ENCODE measurements at regions of chr12 and their contacts with region 1.

Region 1: GRCh38 chr12:3299929-3300832 is 190.8 kb upstream of the PRMT8 start:
- DNase-seq: peak; percentile 92 to 96
- ATAC-seq: peak; percentile 86 to 93 (median 90)
- H3K4me3 ChIP-seq: no peak overlapping the region
- H3K27ac ChIP-seq: peak overlapping the region; percentile 71
- H3K4me1 ChIP-seq: peaks cover 14% of the 10 kb centered on the region
- H3K27me3 ChIP-seq: peaks cover 0 to 4% (median 0%) of the 10 kb centered on the region in 3 donors
- CTCF ChIP-seq: peak; percentile 92

Region 2: DNA sequence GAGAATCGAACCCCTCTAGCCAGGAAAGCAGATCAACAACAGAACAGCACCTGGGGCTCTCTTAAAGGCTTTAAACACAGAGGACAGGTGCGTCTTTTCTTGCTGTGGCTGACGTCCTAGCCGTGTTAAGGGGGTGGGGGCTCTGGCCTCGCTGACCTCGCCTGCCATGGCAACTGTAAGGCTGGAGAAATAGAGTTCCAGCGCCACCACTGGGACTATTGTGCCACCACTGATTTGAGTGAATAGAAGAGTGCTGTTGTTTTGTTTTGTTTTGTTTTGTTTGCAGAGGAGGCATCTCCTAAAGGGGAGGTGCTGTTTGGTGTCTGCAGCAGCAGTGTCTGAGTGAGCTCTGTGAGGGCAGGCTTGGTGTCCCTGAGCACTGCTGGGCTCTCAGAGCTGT is 156.6 kb after region 1 on chr12:
- intact Hi-C with region 1: loop called in 1 of 2 experiments (anchors 2 kb)
- DNase-seq: no peak
- ATAC-seq: no peak
- H3K4me3 ChIP-seq: no peak overlapping the region
- H3K27ac ChIP-seq: no peak overlapping the region
- H3K4me1 ChIP-seq: no peaks in the 10 kb centered on the region
- H3K27me3 ChIP-seq: peaks cover 0 to 19% (median 2%) of the 10 kb centered on the region in 3 donors
- CTCF ChIP-seq: no peak

Region 3: GRCh38 chr12:3533703-3534386 is 233.7 kb after region 1 on chr12:
- intact Hi-C with region 1: loop called in 1 of 2 experiments (anchors 5 kb)
- DNase-seq: peak in 1 of 2 donors; percentile 78
- ATAC-seq: peak; percentile 42 to 83 (median 66)
- H3K4me3 ChIP-seq: no peak overlapping the region
- H3K27ac ChIP-seq: peak overlapping the region; percentile 23
- H3K4me1 ChIP-seq: peaks cover 26% of the 10 kb centered on the region
- H3K27me3 ChIP-seq: no peaks in the 10 kb centered on the region
- CTCF ChIP-seq: peak; percentile 13

Region 4: GRCh38 chr12:3777206-3777809 is 477.1 kb after region 1 on chr12:
- intact Hi-C with region 1: loop called (anchors 1 to 5 kb)
- DNase-seq: no peak
- ATAC-seq: peak; percentile 66 to 86 (median 70)
- H3K4me3 ChIP-seq: no peak overlapping the region
- H3K27ac ChIP-seq: no peak overlapping the region
- H3K4me1 ChIP-seq: no peaks in the 10 kb centered on the region
- H3K27me3 ChIP-seq: no peaks in the 10 kb centered on the region
- CTCF ChIP-seq: peak; percentile 72

Region 5: DNA sequence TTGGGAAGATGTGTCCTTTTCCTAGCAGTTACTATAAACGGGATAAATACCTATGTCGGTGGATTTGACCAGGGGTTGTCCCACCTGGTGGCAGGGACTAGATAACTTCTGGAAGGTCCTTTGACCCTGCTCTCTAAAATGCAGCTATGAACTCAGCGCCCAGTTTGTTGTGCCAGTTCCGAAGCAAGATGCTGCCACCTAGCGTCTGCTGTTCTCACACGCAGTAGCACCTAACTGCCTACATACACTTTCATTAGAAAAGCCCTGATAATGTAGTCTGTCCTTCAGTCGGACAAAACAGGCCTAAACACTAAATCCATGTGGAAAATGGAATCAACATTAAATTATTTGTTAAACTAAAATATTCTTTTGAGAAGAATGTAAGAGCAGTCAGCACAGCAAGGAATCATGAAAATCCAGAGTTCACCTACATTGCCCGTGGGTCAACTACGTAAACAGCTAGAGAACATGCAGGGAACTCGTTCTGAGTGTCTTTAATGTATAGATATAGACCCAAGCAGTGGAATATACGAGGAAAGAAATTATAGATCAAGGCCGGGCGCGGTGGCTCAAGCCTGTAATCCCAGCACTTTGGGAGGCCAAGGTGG is 503.8 kb after region 1 on chr12:
- intact Hi-C with region 1: loop called (anchors 1 to 5 kb)
- DNase-seq: peak; percentile 66 to 79
- ATAC-seq: peak; percentile 75 to 92 (median 84)
- H3K4me3 ChIP-seq: no peak overlapping the region
- H3K27ac ChIP-seq: no peak overlapping the region
- H3K4me1 ChIP-seq: no peaks in the 10 kb centered on the region
- H3K27me3 ChIP-seq: no peaks in the 10 kb centered on the region
- CTCF ChIP-seq: peak; percentile 82

Region 6: DNA sequence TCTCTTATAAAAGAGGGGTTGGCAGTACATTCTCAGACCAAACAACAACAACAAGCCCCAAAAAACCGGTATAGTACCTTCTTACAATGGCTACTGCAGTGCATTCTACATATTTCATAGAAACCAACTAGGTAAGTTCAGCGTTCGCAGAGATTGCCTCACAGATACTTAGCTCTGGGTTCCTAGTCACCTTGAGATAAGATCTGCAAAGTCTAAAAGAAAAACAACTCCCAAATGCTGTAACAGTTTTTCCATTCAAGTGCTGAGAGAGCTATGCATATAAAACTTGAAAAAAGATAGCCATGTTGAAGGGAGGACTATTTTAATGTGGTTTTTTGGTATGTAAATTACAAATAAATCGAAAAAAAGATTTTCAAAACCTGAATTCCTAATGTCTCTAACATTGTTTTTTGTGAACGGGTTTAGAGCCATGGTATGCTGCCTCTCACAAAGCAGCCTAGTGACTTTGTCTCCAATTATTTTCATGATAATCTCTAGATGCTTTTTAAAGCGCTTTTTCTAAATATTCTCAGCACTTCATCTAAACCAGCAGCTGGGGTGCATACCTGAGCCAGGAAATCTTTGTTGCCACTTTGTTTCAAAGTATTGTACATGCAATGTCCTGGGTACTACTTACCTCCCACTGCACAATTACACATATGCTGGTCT is 509.3 kb after region 1 on chr12:
- intact Hi-C with region 1: loop called in 1 of 2 experiments (anchors 5 kb)
- DNase-seq: no peak
- ATAC-seq: no peak
- H3K4me3 ChIP-seq: no peak overlapping the region
- H3K27ac ChIP-seq: no peak overlapping the region
- H3K4me1 ChIP-seq: no peaks in the 10 kb centered on the region
- H3K27me3 ChIP-seq: no peaks in the 10 kb centered on the region
- CTCF ChIP-seq: no peak

Region 7: DNA sequence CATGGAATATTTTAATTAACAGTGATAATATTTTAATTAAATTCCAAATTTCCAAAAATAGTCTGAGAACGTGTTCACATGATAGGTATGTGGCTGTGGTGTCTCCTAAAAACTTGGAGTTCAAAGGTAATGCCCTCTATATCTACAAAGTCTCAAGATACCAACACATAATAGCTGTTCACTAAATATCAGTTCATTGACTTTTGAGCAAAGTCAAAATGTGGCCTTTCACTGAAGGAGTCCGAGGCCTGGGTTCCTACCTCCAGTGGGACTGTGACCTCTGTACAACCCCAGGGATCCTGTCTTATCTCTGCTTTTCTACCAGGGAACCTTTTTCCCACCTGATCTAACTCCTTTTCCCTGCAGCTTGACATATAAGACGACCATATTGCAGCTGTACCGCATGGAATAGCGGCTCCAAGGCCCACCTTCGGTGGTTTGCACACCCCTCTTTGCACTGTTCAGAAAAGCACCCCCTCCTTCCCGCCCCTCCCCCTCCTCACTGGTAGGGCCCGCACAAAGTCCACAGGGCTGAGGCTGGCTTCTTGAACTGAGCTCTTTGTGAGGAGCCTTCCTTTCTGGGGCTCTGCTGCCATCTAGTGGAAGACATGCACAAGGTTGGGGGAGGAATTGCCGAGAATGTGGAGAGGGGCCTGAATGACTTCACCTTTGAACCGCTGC is 976.5 kb after region 1 on chr12:
- intact Hi-C with region 1: loop called in 1 of 2 experiments (anchors 2 kb)
- DNase-seq: peak; percentile 77 to 86
- ATAC-seq: peak; percentile 64 to 78 (median 74)
- H3K4me3 ChIP-seq: peak overlapping the region; percentile 69
- H3K27ac ChIP-seq: no peak overlapping the region
- H3K4me1 ChIP-seq: peaks cover 37% of the 10 kb centered on the region
- H3K27me3 ChIP-seq: peaks cover 0 to 52% (median 29%) of the 10 kb centered on the region in 3 donors
- CTCF ChIP-seq: peak; percentile 88